PC-3 (cell line): ENCODE measurements at regions of chr3 and their contacts with region 1.

Region 1: GRCh38 chr3:104628185-104628789 is 738.4 kb upstream of the ALCAM start:
- DNase-seq: peak; percentile 91
- ATAC-seq: peak; percentile 75
- H3K4me3 ChIP-seq: peak overlapping the region; percentile 28; the same call in 1 of the 2 replicates
- H3K27ac ChIP-seq: peak overlapping the region; percentile 74
- H3K4me1 ChIP-seq: peaks cover 27% of the 10 kb centered on the region
- H3K27me3 ChIP-seq: no peaks in the 10 kb centered on the region
- CTCF ChIP-seq: peak; percentile 85

Region 2: DNA sequence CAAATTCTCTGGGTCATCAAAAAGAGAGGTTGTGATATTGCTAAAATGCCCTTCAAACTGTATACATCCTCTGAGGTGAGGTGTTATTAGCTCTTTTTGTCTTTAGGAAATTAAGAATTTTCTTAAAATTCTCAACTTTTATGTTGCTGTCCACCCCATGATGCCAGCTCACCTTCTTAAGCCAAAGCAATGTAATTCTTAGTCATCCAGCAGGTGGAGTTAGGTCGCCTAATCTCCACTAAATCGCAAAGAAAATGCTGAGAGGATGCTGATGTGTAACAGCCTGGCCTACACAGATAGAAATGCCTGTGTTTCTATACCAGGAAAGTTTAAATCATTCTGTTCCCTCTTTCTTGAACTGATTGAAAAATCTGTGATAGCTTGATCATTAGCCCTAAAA is 31.7 kb before region 1 on chr3:
- CTCF ChIA-PET with region 1: no interaction called
- POLR2A ChIA-PET with region 1: no interaction called
- intact Hi-C with region 1: loop called (anchors 1 kb)
- DNase-seq: peak; percentile 84
- ATAC-seq: peak; percentile 82
- H3K4me3 ChIP-seq: no peak overlapping the region
- H3K27ac ChIP-seq: peak overlapping the region; percentile 38
- H3K4me1 ChIP-seq: peaks cover 28% of the 10 kb centered on the region
- H3K27me3 ChIP-seq: no peaks in the 10 kb centered on the region
- CTCF ChIP-seq: peak; percentile 86

Region 3: GRCh38 chr3:104892044-104892443 is 263.8 kb after region 1 on chr3:
- CTCF ChIA-PET with region 1: no interaction called
- POLR2A ChIA-PET with region 1: no interaction called
- intact Hi-C with region 1: loop called (anchors 10 kb)
- DNase-seq: no peak
- ATAC-seq: no peak
- H3K4me3 ChIP-seq: no peak overlapping the region
- H3K27ac ChIP-seq: no peak overlapping the region
- H3K4me1 ChIP-seq: peaks cover 16% of the 10 kb centered on the region
- H3K27me3 ChIP-seq: no peaks in the 10 kb centered on the region
- CTCF ChIP-seq: no peak

Region 4: GRCh38 chr3:104909198-104909597 is 280.9 kb after region 1 on chr3:
- CTCF ChIA-PET with region 1: no interaction called
- POLR2A ChIA-PET with region 1: no interaction called
- intact Hi-C with region 1: loop called (anchors 1 kb)
- DNase-seq: peak; percentile 81
- ATAC-seq: peak; percentile 88
- H3K4me3 ChIP-seq: peak overlapping the region; percentile 4; the same call in 1 of the 2 replicates
- H3K27ac ChIP-seq: peak overlapping the region; percentile 78
- H3K4me1 ChIP-seq: peaks cover 30% of the 10 kb centered on the region
- H3K27me3 ChIP-seq: no peaks in the 10 kb centered on the region
- CTCF ChIP-seq: no peak

Region 5: GRCh38 chr3:104952146-104952972 is 324.1 kb after region 1 on chr3:
- CTCF ChIA-PET with region 1: no interaction called
- POLR2A ChIA-PET with region 1: interaction called, 4 read pairs
- intact Hi-C with region 1: loop called (anchors 10 kb)
- DNase-seq: peak; percentile 94
- ATAC-seq: peak; percentile 100
- H3K4me3 ChIP-seq: no peak overlapping the region
- H3K27ac ChIP-seq: peak overlapping the region; percentile 92
- H3K4me1 ChIP-seq: peaks cover 21% of the 10 kb centered on the region
- H3K27me3 ChIP-seq: no peaks in the 10 kb centered on the region
- CTCF ChIP-seq: no peak

Region 6: GRCh38 chr3:105014631-105015030 is 386.3 kb after region 1 on chr3:
- CTCF ChIA-PET with region 1: no interaction called
- POLR2A ChIA-PET with region 1: no interaction called
- intact Hi-C with region 1: loop called (anchors 5 kb)
- DNase-seq: peak; percentile 69
- ATAC-seq: peak; percentile 98
- H3K4me3 ChIP-seq: no peak overlapping the region
- H3K27ac ChIP-seq: no peak overlapping the region
- H3K4me1 ChIP-seq: peaks cover 18% of the 10 kb centered on the region
- H3K27me3 ChIP-seq: no peaks in the 10 kb centered on the region
- CTCF ChIP-seq: no peak

Region 7: DNA sequence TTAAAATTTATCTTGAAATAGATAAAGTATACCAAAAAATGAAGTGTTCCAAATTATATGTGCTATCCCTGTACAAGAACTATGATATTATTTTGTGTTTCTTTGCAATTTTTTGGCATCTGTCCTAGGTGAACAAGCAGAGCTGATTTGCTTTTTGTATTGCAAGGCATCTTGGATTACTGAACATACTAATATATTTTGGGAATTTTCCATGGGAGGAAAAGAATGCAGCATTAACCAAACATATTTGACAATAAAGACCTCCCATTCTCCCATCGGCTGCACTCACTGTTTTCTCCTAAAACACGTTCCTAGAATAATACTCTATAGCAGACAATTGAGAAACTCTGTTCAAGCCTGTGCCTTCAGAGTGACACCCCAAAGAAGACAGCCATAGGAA is 473.3 kb after region 1 on chr3:
- CTCF ChIA-PET with region 1: no interaction called
- POLR2A ChIA-PET with region 1: no interaction called
- intact Hi-C with region 1: loop called (anchors 10 kb)
- DNase-seq: no peak
- ATAC-seq: no peak
- H3K4me3 ChIP-seq: no peak overlapping the region
- H3K27ac ChIP-seq: no peak overlapping the region
- H3K4me1 ChIP-seq: no peaks in the 10 kb centered on the region
- H3K27me3 ChIP-seq: no peaks in the 10 kb centered on the region
- CTCF ChIP-seq: no peak